IMR-90 (cell line): ENCODE measurements at regions of chr17 and their contacts with region 1.

Region 1: GRCh38 chr17:37752482-37752881 is 7.6 kb upstream of the HNF1B start:
- DNase-seq: peak; percentile 77
- ATAC-seq: peak; percentile 84
- H3K4me3 ChIP-seq: no peak overlapping the region
- H3K27ac ChIP-seq: no peak overlapping the region
- H3K4me1 ChIP-seq: peaks cover 7% of the 10 kb centered on the region; the same call in 1 of the 2 replicates
- H3K27me3 ChIP-seq: peaks cover 13% of the 10 kb centered on the region
- CTCF ChIP-seq: no peak
- POLR2A ChIP-seq: no peak
- RAD21 ChIP-seq: peak; percentile 7; the same call in 1 of the 2 replicates

Region 2: DNA sequence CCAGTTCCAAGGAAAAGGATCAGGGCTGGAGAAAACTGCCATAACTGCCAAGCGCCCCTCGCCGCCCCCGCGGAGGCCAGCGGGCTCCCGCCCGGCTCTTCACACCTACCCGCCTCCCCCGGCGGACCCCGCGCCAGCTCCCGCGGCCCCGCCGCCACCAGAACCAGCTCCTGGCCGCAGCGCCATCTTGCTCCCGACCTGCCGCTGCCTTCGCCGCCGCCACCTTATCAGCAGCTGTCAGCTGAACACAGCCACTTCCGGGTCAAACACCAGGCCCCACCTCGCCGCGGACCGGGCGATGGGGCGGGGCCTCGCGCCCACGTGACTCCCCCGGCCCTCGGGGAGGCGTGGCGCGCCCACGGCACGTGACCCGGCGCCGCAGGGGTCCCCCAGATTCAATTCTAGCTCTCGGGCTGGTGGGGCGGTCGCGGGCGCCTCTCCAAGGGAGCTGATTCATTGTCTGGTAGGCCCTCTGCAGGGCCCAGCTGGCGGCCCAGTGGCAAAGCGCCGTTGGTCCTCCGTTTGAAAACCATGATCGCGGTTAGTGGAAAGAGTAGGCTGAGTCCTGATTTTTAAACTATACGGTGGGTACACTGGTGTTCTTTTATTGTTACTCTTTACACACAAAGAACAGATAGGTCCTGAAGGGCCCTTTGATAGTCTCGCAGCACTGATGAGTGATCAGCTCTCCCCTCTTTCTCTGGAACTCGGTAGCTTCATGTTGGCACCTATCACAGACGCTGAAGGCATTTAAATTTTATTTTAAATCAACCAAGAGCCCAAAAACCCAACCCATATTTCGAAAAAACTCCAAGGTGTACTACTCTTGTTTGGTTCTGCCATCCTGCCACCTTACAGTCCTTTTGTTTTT is 143.1 kb before region 1 on chr17 and contains the start of gene SYNRG:
- CTCF ChIA-PET with region 1: no interaction called
- POLR2A ChIA-PET with region 1: no interaction called
- dilution Hi-C with region 1: no loop called
- in situ Hi-C with region 1: no loop called
- intact Hi-C with region 1: no loop called
- DNase-seq: peak; percentile 94
- ATAC-seq: peak; percentile 88
- H3K4me3 ChIP-seq: peak within 1 kb of the TSS; percentile 89
- H3K27ac ChIP-seq: peak within 1 kb of the TSS; percentile 90
- H3K4me1 ChIP-seq: peaks cover 6% of the 10 kb centered on the region
- H3K27me3 ChIP-seq: no peaks in the 10 kb centered on the region
- CTCF ChIP-seq: peak; percentile 41
- POLR2A ChIP-seq: peak; percentile 74
- RAD21 ChIP-seq: peak; percentile 27; the same call in 1 of the 2 replicates
- total RNA-seq, gene SYNRG: 11.4 and 11.7 TPM in 2 replicates

Region 3: GRCh38 chr17:37657202-37657601 is 95.3 kb before region 1 on chr17:
- CTCF ChIA-PET with region 1: no interaction called
- POLR2A ChIA-PET with region 1: no interaction called
- dilution Hi-C with region 1: no loop called
- in situ Hi-C with region 1: no loop called
- intact Hi-C with region 1: no loop called
- DNase-seq: no peak
- ATAC-seq: no peak
- H3K4me3 ChIP-seq: no peak overlapping the region
- H3K27ac ChIP-seq: no peak overlapping the region
- H3K4me1 ChIP-seq: no peaks in the 10 kb centered on the region
- H3K27me3 ChIP-seq: no peaks in the 10 kb centered on the region
- CTCF ChIP-seq: no peak
- POLR2A ChIP-seq: no peak
- RAD21 ChIP-seq: no peak

Region 4: DNA sequence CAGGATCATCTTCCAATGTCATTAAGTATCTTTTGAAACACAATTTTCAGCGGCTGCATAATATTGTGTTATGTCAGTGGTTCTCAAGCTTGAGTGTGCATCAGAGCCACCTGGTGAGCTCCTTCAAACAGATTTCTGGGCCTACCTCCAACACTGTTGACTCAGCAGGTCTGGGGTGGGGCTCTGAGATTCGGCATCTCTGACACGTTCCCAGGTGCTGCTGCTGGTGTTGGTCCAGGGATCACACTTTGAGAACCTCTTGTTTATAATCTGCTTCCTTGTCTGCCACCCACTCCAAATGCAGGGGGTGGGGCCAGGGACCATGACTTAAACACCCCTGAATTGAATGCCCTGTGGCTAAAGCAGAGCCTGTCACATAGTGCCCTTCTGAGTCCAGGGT is 66.2 kb after region 1 on chr17:
- CTCF ChIA-PET with region 1: no interaction called
- POLR2A ChIA-PET with region 1: no interaction called
- dilution Hi-C with region 1: no loop called
- in situ Hi-C with region 1: loop called (anchors 10 kb)
- intact Hi-C with region 1: no loop called
- DNase-seq: peak; percentile 89
- ATAC-seq: no peak
- H3K4me3 ChIP-seq: no peak overlapping the region
- H3K27ac ChIP-seq: no peak overlapping the region
- H3K4me1 ChIP-seq: peaks cover 4% of the 10 kb centered on the region
- H3K27me3 ChIP-seq: no peaks in the 10 kb centered on the region
- CTCF ChIP-seq: no peak
- POLR2A ChIP-seq: no peak
- RAD21 ChIP-seq: no peak